Activated CD4-positive, alpha-beta memory T cell treated with anti-CD3 and anti-CD28 coated beads for 36 hours (primary cell): ENCODE measurements at regions of chr3 and their contacts with region 1.

Region 1: DNA sequence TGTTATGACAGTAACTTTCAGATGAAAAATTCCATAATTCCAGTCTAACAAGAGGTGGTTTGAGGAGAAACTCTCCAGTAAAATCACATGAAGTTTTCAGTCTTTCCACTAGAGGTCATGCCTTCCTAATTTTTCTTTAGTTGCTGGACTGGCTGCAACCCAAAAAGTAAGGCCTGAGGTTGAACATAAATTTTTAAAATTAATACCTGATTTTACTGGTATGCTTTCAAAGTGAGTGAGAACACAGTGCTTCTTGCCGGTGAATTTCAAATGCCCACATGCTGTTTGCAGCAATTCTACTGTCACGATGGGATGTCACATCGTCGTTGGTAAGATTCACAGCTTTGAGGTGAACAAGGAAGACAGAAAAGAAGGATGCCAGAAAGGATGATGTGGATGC is 89.0 kb upstream of the FGF12 start:
- DNase-seq: no peak
- H3K4me3 Mint-ChIP-seq: no peak overlapping the region
- H3K27ac Mint-ChIP-seq: no peak overlapping the region
- H3K4me1 Mint-ChIP-seq: peaks cover 45% of the 10 kb centered on the region
- H3K27me3 Mint-ChIP-seq: no peaks in the 10 kb centered on the region

Region 2: GRCh38 chr3:192831111-192831644 is 14.8 kb after region 1 on chr3:
- CTCF ChIA-PET with region 1: interaction called, 5 read pairs
- POLR2A ChIA-PET with region 1: interaction called, 4 read pairs
- intact Hi-C with region 1: loop called (anchors 1 kb)
- DNase-seq: peak; percentile 64
- H3K4me3 Mint-ChIP-seq: no peak overlapping the region
- H3K27ac Mint-ChIP-seq: peak overlapping the region; percentile 24
- H3K4me1 Mint-ChIP-seq: peaks cover 39% of the 10 kb centered on the region
- H3K27me3 Mint-ChIP-seq: peaks cover 1% of the 10 kb centered on the region

Region 3: GRCh38 chr3:192887047-192887446 is 70.7 kb after region 1 on chr3:
- CTCF ChIA-PET with region 1: interaction called, 4 read pairs
- POLR2A ChIA-PET with region 1: interaction called, 3 read pairs
- intact Hi-C with region 1: loop called (anchors 1 kb)
- DNase-seq: peak; percentile 48
- H3K4me3 Mint-ChIP-seq: peak overlapping the region; percentile 39
- H3K27ac Mint-ChIP-seq: peak overlapping the region; percentile 84
- H3K4me1 Mint-ChIP-seq: peaks cover 58% of the 10 kb centered on the region
- H3K27me3 Mint-ChIP-seq: peaks cover 5% of the 10 kb centered on the region

Region 4: GRCh38 chr3:192899540-192899982 is 83.2 kb after region 1 on chr3:
- CTCF ChIA-PET with region 1: interaction called, 8 read pairs
- POLR2A ChIA-PET with region 1: interaction called, 12 read pairs
- intact Hi-C with region 1: loop called (anchors 1 kb)
- DNase-seq: peak; percentile 37
- H3K4me3 Mint-ChIP-seq: no peak overlapping the region
- H3K27ac Mint-ChIP-seq: peak overlapping the region; percentile 90
- H3K4me1 Mint-ChIP-seq: peaks cover 54% of the 10 kb centered on the region
- H3K27me3 Mint-ChIP-seq: peaks cover 8% of the 10 kb centered on the region

Region 5: DNA sequence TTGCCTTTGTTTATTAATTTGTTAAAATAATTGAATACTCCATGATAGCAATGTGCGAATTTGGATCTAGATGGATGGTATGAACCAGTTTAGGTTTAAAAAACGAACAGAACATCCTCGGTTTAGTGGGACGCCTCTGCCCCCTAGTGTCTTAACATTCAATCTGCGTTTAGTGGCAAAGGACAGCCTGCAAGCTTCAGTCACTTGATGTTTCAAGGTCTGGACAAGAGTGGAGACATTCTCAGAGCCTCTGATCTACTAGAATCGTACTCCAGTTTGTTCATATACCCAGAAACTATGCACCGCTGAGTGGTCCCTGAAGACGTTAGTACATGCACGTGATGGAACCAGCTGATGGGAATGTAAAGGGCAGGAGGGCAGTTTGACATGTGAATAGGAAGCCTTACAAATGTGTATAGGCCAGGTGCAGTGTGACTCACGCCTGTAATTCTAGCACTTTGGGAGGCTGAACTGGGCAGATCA is 756.1 kb after region 1 on chr3:
- CTCF ChIA-PET with region 1: interaction called, 23 read pairs
- POLR2A ChIA-PET with region 1: no interaction called
- intact Hi-C with region 1: loop called (anchors 2 kb)
- DNase-seq: peak; percentile 64
- H3K4me3 Mint-ChIP-seq: no peak overlapping the region
- H3K27ac Mint-ChIP-seq: no peak overlapping the region
- H3K4me1 Mint-ChIP-seq: no peaks in the 10 kb centered on the region
- H3K27me3 Mint-ChIP-seq: no peaks in the 10 kb centered on the region